ENCODE measurements at regions of chr2 and their contacts with region 1.

Region 1: GRCh38 chr2:113965644-113966043 is 75.8 kb downstream of the ACTR3 start:
- DNase-seq: no peak
- CTCF ChIP-seq: peak; percentile 61

Region 2: GRCh38 chr2:113922784-113923183 is 42.9 kb before region 1 on chr2:
- CTCF ChIA-PET with region 1: no interaction called
- POLR2A ChIA-PET with region 1: no interaction called
- DNase-seq: no peak
- CTCF ChIP-seq: no peak

Region 3: GRCh38 chr2:113940891-113941290 is 24.8 kb before region 1 on chr2:
- CTCF ChIA-PET with region 1: interaction called, 12 read pairs
- POLR2A ChIA-PET with region 1: no interaction called
- DNase-seq: no peak
- CTCF ChIP-seq: no peak

Region 4: DNA sequence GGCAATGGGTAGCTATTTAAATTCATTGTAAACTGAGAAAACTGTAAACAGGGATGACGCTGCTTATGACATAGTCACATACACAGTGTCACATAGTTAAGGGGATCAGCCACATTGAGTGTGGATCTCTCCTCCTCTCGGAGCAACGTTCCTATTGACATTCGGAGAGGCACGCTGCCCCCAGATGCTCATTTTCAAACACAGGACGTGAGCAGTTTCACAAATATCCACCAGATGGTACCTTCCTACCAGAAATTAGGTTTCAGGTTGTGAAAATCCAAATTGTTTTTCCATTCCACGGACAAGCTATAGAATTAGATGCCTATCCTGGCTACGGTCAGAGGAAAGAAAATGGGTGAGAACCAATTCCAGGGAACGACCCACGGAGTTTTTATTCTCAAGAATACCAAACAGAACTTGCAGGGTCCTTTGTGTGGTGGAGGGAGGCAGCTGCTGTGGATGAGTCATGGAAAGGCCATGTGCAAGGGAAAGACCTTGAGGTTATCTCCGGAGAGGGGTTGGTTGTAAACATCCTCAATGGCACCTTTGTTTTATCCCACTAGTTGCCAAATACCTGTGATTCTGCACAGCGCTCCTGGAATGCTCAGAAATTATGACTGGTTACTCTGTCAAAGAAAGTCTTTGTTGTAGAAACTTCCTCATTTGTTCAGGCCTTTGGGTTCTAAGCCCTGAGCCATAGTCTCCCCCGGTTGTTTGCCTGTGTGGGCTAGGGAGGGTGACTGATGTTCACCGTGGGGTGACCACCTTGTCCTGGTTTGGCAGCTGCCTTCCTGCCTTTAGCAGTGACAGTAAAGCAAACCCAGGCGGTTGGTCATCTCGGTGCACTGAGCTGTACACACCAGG is 12.2 kb after region 1 on chr2:
- CTCF ChIA-PET with region 1: interaction called, 32 read pairs
- POLR2A ChIA-PET with region 1: no interaction called
- DNase-seq: no peak
- CTCF ChIP-seq: no peak

Region 5: GRCh38 chr2:114550895-114551793 is 585.5 kb after region 1 on chr2:
- CTCF ChIA-PET with region 1: interaction called, 13 read pairs
- POLR2A ChIA-PET with region 1: no interaction called
- DNase-seq: peak; percentile 26
- CTCF ChIP-seq: peak; percentile 51